ENCODE measurements at regions of chr17 and their contacts with region 1.

Region 1: DNA sequence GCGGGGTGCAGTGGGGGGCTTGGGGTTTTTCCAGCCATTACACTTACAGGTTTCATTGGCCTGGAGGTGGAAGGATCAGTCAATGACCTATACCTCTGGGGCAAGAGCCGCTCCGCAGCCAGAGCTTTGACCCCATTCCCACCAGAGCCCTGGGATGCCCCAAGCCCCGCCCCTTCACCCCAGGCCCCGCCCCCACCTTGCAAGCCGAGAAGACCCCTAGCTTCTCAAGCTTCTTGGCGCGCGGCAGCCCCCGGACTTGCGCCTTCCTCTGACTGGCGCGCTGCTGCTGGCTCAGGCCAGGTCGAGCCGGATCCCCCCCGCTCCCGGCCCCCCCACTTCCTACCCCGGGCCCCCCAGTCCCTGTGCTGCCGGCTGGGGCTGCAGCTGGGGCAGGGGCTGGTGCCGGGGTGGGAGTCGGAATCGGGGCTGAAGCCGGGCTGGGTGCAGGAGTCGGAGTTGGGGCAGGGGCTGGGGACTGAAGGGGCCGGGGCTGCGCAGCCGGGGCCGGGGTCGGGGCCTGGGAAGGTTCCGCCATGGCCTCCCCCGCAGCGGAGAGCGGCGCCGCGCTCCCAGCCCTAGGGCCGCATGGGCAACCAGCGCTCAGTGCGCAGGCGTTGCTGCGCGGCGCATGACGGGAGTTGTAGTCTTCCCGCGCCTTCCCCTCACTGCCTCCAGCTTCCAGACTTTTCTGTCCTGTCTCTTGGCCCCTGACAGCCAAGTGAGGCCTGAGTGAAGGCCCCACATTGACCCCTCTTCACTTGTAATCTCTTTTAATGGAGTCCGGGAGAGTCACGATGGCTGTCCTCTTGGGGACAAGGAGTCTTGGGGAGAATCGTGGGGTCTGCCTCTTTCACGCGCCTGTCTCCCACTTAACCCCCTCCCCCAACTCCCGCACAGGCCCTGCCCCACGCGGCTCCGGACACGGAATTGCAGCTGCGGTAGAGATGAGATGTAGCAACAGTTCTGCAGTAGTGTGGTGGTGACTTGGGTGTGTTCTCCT is at the start of gene KAT2A:
- ATAC-seq: peak; percentile 84 to 96 (median 92)
- H3K4me3 ChIP-seq: peak within 1 kb of the TSS; percentile 71 to 94 (median 77)
- H3K27ac ChIP-seq: peak within 1 kb of the TSS; percentile 66 to 87
- H3K4me1 ChIP-seq: peaks cover 11 to 19% of the 10 kb centered on the region in 2 donors
- total RNA-seq, gene KAT2A: 9.1 to 48.3 (median 19.2) TPM

Region 2: GRCh38 chr17:41966463-41967140 is 154.5 kb before region 1 on chr17 and contains the start of gene CNP:
- in situ Hi-C with region 1: loop called in 1 of 9 experiments (anchors 25 kb)
- ATAC-seq: peak; percentile 72 to 88 (median 86)
- H3K4me3 ChIP-seq: peak within 1 kb of the TSS; percentile 70 to 89 (median 83)
- H3K27ac ChIP-seq: peak within 1 kb of the TSS; percentile 23 to 73
- H3K4me1 ChIP-seq: peaks cover 10 to 14% of the 10 kb centered on the region in 2 donors
- total RNA-seq, gene CNP: 20.5 to 99.0 (median 51.0) TPM